Calu3 (cell line): ENCODE measurements at regions of chr18 and their contacts with region 1.

Region 1: DNA sequence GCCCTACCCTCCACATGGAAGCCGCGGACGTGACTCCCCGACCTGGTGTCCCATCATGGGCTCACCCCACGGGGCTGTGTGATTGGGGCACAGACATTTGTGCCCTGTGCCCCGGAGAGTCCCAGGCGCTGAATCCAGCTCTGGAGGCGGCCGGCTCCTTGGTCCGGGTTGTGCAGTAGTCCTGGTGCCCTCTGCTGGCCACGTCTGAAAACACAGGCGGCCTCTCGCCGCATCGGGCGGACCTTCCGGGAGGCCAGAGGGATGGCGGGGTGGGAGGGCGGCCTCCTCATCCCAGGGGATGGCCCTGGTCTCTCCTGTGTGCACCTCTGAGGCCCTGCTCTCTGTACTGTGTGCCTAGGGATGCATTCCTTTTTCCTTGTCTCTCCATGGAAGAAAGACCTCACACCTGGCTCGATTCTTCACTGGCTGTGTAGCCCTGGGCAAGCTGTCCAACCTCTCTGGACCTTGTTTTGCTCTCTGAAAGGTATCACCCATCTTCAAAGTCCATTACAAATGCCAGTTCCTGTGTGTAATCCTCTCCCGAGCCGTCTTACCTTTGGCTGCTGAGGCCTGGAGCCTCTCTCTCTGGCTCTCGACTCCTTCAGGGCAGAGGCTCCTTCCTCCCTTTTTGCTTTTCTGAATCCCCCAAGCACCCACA is 27.6 kb downstream of the CELF4 start:
- DNase-seq: peak; percentile 86
- H3K4me3 Mint-ChIP-seq: no peak overlapping the region
- H3K27ac Mint-ChIP-seq: no peak overlapping the region
- H3K4me1 Mint-ChIP-seq: no peaks in the 10 kb centered on the region
- H3K27me3 Mint-ChIP-seq: peaks cover 100% of the 10 kb centered on the region
- CTCF ChIP-seq: peak; percentile 86

Region 2: DNA sequence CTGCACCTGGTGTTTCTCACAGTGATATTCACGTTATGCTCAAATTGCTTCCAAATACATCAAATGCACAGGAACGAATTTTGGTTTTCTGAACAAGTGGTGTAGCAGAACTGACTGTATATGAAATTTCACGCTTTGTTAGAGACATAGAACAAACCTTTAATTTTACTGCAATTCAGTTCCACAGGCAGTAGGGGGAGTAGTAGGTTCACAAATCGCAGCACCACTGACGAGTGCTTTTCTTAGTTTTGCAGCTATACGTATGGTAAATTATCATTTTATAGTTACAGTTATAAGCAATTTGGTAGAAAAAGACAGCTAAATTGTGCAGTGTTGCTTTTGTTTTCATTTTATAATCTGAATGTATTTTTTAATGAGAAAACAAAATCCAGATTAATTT is 595.7 kb before region 1 on chr18:
- CTCF ChIA-PET with region 1: interaction called, 3 read pairs
- intact Hi-C with region 1: loop called (anchors 5 kb)
- DNase-seq: peak; percentile 40
- H3K4me3 Mint-ChIP-seq: no peak overlapping the region
- H3K27ac Mint-ChIP-seq: no peak overlapping the region
- H3K4me1 Mint-ChIP-seq: peaks cover 10% of the 10 kb centered on the region
- H3K27me3 Mint-ChIP-seq: no peaks in the 10 kb centered on the region
- CTCF ChIP-seq: peak; percentile 73

Region 3: DNA sequence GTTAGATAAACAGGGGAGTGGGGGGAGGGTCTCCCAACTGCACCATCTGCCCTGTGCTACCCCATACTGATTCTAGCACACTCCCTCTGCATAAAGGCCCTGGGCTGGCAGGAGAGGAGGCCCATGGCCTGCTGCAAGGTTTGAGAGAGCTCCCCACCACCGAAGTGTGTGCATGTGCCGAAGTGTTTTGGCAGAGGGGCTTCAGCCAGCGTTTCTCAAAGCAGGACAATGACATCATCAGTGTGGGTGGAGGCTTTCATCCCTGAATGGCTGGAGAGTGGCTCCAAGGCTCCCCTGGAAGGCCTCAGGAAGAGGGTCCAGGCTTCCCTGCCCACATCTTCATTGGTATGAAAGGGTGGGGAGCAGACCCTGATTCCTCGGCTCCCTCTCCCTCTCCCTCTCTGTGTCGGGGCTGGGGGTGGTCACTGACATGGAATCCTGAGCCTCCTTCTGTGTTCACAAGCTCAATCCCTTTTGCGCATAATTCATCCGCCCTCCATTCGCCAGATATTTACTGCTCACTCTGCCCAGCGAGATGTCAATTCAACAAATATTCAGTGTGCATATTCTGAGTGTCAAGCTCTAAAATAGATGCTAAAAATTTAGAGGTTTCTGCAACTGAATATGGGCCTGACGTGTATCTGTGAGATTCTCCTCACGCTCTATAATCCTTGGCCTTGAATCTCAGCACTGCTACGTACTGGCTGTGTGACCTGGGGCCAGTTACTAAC is 94.5 kb before region 1 on chr18:
- CTCF ChIA-PET with region 1: no interaction called
- intact Hi-C with region 1: loop called (anchors 1 kb)
- DNase-seq: no peak
- H3K4me3 Mint-ChIP-seq: no peak overlapping the region
- H3K27ac Mint-ChIP-seq: no peak overlapping the region
- H3K4me1 Mint-ChIP-seq: no peaks in the 10 kb centered on the region
- H3K27me3 Mint-ChIP-seq: peaks cover 100% of the 10 kb centered on the region
- CTCF ChIP-seq: no peak